Activated B cell treated with CpG ODN at 0.5 μM for 24 hours (primary cell): ENCODE measurements at regions of chr2 and their contacts with region 1.

Region 1: GRCh38 chr2:205680067-205680466 is 2.2 kb upstream of the NRP2 start:
- DNase-seq: no peak
- ATAC-seq: peak; percentile 32
- H3K4me3 Mint-ChIP-seq: peak overlapping the region; percentile 44
- H3K27ac Mint-ChIP-seq: peak overlapping the region; percentile 37
- H3K4me1 Mint-ChIP-seq: peaks cover 40% of the 10 kb centered on the region
- H3K27me3 Mint-ChIP-seq: peaks cover 35% of the 10 kb centered on the region
- CTCF ChIP-seq: no peak

Region 2: DNA sequence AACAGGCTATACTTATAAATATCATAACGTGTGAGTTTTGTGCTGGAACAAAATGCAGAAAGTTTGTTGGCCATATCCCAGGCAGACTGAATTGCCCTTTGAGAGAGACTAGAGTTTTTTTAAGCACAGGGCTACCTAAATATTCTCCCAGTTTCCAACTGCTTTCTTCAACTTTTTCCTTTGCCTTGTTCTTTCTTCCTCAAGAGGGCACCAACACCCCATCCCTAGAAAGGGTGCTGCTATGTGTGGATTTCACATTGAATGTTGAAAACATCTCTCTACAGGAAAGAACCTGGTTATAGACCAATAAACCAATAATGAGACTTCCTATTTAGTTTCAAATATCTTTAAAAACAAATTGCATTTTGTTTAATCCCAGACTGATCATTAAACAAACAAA is 1655.6 kb before region 1 on chr2:
- CTCF ChIA-PET with region 1: no interaction called
- POLR2A ChIA-PET with region 1: no interaction called
- intact Hi-C with region 1: loop called (anchors 10 kb)
- DNase-seq: no peak
- ATAC-seq: no peak
- H3K4me3 Mint-ChIP-seq: no peak overlapping the region
- H3K27ac Mint-ChIP-seq: no peak overlapping the region
- H3K4me1 Mint-ChIP-seq: peaks cover 14% of the 10 kb centered on the region
- H3K27me3 Mint-ChIP-seq: no peaks in the 10 kb centered on the region
- CTCF ChIP-seq: no peak

Region 3: DNA sequence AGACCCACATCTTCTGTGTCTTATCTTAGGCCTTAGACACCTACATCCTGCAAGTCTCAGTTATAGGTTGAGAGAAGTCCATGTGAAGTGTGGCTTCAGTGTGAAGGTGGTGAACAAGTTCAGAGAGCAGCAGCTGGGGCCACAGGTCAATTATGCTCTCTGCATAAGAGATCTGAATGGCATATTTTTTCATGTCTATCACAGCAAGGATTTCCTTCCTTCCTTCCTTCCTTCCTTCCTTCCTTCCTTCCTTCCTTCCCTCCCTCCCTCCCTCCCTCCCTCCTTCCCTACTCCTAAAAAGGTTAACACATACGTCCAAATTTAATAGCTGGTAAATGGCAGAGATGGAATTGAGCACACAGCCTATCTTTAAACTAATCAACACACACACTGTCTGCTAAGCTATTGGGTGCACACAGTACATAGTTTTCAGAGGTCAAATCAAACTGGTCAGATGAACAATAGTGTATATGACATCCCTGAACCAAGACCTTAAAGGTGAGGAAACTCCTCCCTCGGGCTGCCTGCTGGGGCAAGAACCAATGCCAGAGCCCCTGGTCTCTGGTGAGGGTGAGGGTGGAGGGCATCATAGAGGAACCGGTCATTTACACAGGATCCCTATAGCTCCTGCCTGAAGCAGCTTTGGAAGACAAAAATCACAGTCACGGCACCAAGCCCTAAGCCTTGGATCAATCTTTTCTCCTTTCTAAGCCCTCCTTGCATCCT is 1502.7 kb before region 1 on chr2:
- CTCF ChIA-PET with region 1: no interaction called
- POLR2A ChIA-PET with region 1: no interaction called
- intact Hi-C with region 1: no loop called
- DNase-seq: no peak
- ATAC-seq: no peak
- H3K4me3 Mint-ChIP-seq: no peak overlapping the region
- H3K27ac Mint-ChIP-seq: no peak overlapping the region
- H3K4me1 Mint-ChIP-seq: no peaks in the 10 kb centered on the region
- H3K27me3 Mint-ChIP-seq: no peaks in the 10 kb centered on the region
- CTCF ChIP-seq: no peak

Region 4: GRCh38 chr2:204325468-204325867 is 1354.6 kb before region 1 on chr2:
- CTCF ChIA-PET with region 1: interaction called, 7 read pairs
- POLR2A ChIA-PET with region 1: no interaction called
- intact Hi-C with region 1: loop called (anchors 1 kb)
- DNase-seq: no peak
- ATAC-seq: peak; percentile 45
- H3K4me3 Mint-ChIP-seq: no peak overlapping the region
- H3K27ac Mint-ChIP-seq: no peak overlapping the region
- H3K4me1 Mint-ChIP-seq: peaks cover 2% of the 10 kb centered on the region
- H3K27me3 Mint-ChIP-seq: peaks cover 2% of the 10 kb centered on the region
- CTCF ChIP-seq: no peak

Region 5: GRCh38 chr2:205427112-205427511 is 253.0 kb before region 1 on chr2:
- CTCF ChIA-PET with region 1: no interaction called
- POLR2A ChIA-PET with region 1: no interaction called
- intact Hi-C with region 1: no loop called
- DNase-seq: no peak
- ATAC-seq: no peak
- H3K4me3 Mint-ChIP-seq: no peak overlapping the region
- H3K27ac Mint-ChIP-seq: no peak overlapping the region
- H3K4me1 Mint-ChIP-seq: no peaks in the 10 kb centered on the region
- H3K27me3 Mint-ChIP-seq: no peaks in the 10 kb centered on the region
- CTCF ChIP-seq: no peak

Region 6: GRCh38 chr2:205596581-205596980 is 83.5 kb before region 1 on chr2:
- CTCF ChIA-PET with region 1: interaction called, 4 read pairs
- POLR2A ChIA-PET with region 1: interaction called, 8 read pairs
- intact Hi-C with region 1: loop called (anchors 1 kb)
- DNase-seq: no peak
- ATAC-seq: no peak
- H3K4me3 Mint-ChIP-seq: no peak overlapping the region
- H3K27ac Mint-ChIP-seq: no peak overlapping the region
- H3K4me1 Mint-ChIP-seq: no peaks in the 10 kb centered on the region
- H3K27me3 Mint-ChIP-seq: peaks cover 4% of the 10 kb centered on the region
- CTCF ChIP-seq: no peak

Region 7: DNA sequence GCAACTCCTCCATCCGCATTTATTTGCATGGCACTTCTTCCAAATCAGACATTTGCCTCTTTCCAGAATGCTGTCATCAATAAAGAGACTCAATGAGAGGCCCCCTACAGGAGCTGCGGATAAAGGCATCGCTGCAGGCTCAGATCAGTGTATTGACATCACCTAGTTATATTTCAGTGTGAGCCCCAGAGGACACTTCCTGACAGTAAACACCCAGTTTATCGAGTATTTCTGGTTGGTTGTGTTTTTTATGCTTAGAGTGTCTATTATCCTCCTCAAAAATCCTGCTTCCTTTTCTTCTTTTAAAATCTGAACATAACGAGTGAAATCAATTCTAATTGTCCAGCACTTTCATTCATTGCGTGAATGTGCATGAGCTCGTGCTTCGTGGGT is 41.0 kb after region 1 on chr2:
- CTCF ChIA-PET with region 1: interaction called, 12 read pairs
- POLR2A ChIA-PET with region 1: interaction called, 14 read pairs
- intact Hi-C with region 1: loop called (anchors 1 kb)
- DNase-seq: no peak
- ATAC-seq: no peak
- H3K4me3 Mint-ChIP-seq: no peak overlapping the region
- H3K27ac Mint-ChIP-seq: no peak overlapping the region
- H3K4me1 Mint-ChIP-seq: peaks cover 27% of the 10 kb centered on the region
- H3K27me3 Mint-ChIP-seq: no peaks in the 10 kb centered on the region
- CTCF ChIP-seq: no peak

Region 8: DNA sequence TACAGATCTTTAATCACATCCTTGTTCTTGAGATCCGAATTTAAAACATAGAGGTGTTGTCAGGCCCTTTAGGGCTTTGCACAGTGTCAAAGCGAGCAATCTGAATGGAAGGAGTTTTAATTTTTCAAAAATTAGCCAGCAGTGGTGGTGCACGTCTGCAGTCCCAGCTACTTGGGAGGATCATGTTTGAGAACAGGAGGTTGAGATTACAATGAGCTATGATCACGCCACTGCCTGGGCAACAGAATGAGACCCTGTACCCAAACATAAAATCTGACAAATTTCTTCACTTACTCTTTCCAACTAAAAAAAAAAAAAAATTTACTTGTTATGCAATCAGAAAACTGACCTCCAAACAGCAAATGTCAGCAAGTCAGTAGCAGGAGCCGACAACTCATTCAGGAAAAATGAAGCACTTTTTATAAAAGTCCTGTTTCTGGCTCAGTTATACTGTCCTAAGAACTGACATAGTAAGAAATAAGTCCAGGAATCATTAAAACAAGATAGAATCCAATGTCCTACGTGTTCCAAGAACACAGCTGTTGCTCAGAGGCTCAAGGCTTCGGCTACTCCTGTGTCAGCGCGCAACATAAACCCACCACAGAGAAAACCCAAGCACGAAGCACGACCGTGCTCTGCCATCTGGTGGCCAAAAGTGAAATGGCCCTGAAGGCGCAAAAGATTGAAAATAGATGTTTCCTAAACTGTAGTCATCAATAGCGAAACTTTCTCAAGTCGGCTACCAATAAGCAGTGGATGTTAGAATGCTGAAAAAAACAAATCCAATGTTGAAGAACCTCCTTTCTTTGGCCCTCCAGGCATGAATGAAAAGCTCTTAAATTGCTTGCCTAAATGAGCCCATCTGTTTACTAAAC is 267.8 kb after region 1 on chr2:
- CTCF ChIA-PET with region 1: no interaction called
- POLR2A ChIA-PET with region 1: no interaction called
- intact Hi-C with region 1: loop called (anchors 5 kb)
- DNase-seq: peak; percentile 28
- ATAC-seq: peak; percentile 64
- H3K4me3 Mint-ChIP-seq: no peak overlapping the region
- H3K27ac Mint-ChIP-seq: no peak overlapping the region
- H3K4me1 Mint-ChIP-seq: peaks cover 2% of the 10 kb centered on the region
- H3K27me3 Mint-ChIP-seq: peaks cover 19% of the 10 kb centered on the region
- CTCF ChIP-seq: peak; percentile 89